CD4-positive, alpha-beta memory T cell (primary cell): ENCODE measurements at regions of chr13 and their contacts with region 1.

Region 1: DNA sequence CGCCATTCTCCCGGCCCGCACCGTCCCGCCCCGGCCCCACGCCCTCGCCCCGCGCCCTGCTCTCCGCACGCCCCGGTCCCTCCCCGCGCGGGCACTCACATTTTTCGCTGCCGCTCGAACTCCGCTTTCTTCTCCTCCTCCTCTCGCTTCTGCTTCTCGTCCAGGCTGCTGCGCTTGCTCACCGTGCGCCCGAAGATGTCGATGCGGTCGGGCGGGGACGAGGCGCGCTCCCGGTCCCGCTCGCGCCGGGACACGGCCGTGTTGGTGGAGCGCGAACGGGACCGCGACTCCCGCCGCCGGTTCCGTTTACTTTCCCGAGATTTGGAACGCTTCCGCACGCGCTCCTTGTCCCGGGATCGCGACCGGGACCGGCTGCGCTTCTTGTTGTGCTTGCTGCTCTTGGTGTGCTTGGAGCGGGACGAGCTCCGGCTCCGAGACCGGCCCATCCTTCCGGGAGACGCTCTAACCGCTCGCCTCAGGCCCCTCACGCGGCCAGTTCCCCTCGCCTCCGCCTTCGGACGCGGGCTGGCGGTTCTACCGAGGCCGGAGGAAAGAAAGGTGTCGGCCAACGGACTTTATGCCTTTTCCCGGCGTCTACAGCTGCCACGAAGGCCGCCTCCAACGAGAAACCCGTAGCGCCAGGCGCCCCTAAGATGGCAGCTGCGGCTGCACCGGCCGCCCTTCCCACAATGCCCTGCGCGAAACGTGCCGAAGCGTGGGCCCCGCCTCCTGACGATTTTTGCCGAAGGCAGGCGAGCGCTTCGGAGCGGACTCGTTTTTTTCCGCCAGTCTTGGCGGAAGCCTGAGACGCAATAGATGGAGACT is at the start of gene ARGLU1:
- DNase-seq: peak; percentile 93 to 97 (median 95)
- H3K4me3 ChIP-seq: peak within 1 kb of the TSS; percentile 33 to 95
- H3K4me3 Mint-ChIP-seq: peak within 1 kb of the TSS; percentile 94 to 100 (median 98)
- H3K27ac ChIP-seq: peak within 1 kb of the TSS; percentile 95
- H3K27ac Mint-ChIP-seq: peak within 1 kb of the TSS; percentile 92 to 98 (median 95)
- H3K4me1 ChIP-seq: peaks cover 59% of the 10 kb centered on the region
- H3K4me1 Mint-ChIP-seq: peaks cover 39 to 67% (median 57%) of the 10 kb centered on the region in 4 donors
- H3K27me3 ChIP-seq: no peaks in the 10 kb centered on the region
- H3K27me3 Mint-ChIP-seq: no peaks in the 10 kb centered on the region
- total RNA-seq, gene ARGLU1: 229 to 252 TPM

Region 2: DNA sequence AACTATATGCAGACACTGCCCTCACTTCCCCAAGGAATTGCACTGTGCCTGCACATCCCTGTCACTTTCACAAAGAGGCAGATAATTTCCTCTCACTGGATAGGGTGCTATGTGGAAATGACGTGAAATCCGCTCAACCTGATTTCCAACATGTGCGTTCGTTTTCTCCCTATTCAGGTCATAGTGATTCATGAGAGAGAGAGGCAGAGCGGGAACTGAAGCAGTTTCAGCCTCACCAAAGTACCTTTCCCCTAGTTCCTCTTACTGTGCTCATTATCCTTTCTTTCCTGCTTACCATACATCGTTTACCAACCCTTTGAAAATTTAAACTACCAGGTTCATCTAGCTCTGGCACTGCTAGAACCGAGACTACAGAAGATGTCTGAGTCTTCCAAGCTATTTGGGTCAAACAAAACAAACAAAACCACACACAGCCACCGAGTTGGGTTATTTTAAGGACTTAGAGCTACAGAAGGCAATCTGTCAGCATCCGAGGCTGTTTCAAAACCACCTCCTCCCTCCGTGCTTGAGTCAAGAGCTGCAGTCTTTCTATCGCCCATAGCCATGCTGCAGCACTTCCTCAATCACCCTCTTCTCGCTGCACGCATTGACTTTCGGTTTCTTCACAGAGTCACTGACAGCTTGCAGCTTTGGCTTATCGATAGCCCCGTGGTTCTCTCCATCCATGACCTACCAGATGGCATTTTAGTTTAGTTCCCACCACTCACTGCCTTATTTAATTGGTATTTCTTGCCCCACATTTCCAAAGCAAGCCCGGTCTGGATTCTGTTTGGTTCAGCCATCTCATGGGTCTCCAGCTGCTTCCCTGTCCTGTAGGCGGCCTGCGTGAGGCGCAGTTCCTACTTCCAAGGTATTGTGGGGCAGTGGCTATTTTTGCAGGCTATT is 1428.1 kb before region 1 on chr13:
- CTCF ChIA-PET with region 1: interaction called, 4 read pairs
- POLR2A ChIA-PET with region 1: interaction called, 14 read pairs
- intact Hi-C with region 1: loop called (anchors 5 kb)
- DNase-seq: peak; percentile 67 to 73 (median 70)
- H3K4me3 ChIP-seq: peak overlapping the region; percentile 49 to 72
- H3K4me3 Mint-ChIP-seq: peak overlapping the region; percentile 85 to 98 (median 94)
- H3K27ac ChIP-seq: peak overlapping the region; percentile 55
- H3K27ac Mint-ChIP-seq: peak overlapping the region; percentile 89 to 98 (median 96)
- H3K4me1 ChIP-seq: peaks cover 12% of the 10 kb centered on the region
- H3K4me1 Mint-ChIP-seq: peaks cover 16 to 20% (median 17%) of the 10 kb centered on the region in 4 donors
- H3K27me3 ChIP-seq: no peaks in the 10 kb centered on the region
- H3K27me3 Mint-ChIP-seq: no peaks in the 10 kb centered on the region